Lower leg skin (tissue), 4 donors: ENCODE measurements at regions of chr10 and their contacts with region 1.

Region 1: DNA sequence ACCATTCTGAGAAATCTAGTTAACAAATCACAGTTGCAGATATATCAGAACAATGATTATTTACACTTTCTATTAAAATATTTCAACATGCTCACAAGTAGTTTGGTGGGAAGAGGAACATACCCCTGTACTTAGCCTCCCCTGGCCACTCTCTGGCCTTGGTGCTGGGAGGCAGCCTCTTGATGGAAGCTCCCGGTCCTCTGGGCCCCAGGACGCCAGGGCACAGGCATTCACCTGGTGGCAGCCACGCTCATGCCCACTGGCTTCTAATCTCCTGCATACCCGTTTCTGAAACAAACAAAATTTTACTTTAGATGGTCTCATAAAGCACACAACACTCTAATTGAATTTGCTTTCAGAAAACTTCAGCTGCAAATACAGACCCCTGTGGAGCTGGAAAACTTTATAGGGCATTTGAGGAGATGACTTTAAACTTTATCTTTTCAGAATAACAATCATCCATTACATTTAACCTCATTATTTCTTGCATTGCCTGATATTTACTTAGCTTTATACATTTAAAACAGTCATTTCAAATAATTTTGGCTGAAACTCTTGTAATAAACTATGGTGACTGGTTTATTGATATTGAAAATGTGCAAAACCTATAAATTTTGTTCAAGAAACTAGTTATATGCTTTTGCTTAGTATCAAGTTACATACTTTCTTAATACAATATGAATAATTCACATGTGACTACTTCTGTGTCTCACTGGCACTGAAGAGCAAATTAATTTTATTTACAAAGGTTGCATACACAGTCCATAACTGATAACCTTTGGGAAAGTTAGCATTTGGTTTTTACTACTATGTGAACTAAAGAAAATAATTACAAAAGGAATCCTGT is 30.8 kb downstream of the C10orf143 start:
- DNase-seq: no peak
- H3K4me3 ChIP-seq: no peak overlapping the region
- CTCF ChIP-seq: no peak
- POLR2A ChIP-seq: no peak

Region 2: DNA sequence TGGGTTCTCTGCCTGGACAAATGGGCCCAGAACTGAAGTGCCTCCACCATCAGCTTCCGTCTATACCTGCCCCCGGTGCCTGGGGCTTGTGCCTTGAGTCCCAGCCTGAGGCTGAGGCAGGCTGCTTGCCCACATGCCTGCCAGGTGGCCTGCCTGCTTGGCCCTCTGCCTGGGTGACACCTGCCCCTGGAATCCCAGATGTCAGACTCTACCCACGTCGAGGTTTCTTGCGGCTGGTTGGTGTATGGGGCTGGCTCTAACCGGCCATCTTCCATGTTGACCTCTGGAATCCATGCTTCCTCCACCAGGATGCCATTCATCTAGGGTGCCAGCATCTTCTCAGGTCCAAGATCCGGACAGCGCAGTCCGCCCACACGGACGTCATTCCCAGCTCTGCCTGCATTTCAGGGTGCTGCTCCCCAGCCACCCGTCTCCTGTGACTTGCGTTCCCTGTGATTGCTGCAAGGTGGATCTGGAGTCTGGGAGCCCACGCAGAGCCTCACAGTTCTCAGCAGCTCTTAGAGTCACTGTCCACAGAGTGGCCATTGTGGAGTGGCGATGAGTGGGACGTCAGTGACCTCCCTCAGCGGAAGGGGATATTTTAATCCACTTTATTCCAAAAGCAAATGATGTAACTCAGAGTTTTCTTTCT is 933.5 kb after region 1 on chr10:
- intact Hi-C with region 1: loop called (anchors 5 kb)
- DNase-seq: peak in 1 of 2 donors; percentile 73
- H3K4me3 ChIP-seq: no peak overlapping the region
- CTCF ChIP-seq: no peak
- POLR2A ChIP-seq: no peak